AG04450 (cell line): ENCODE measurements at regions of chr17 and their contacts with region 1.

Region 1: DNA sequence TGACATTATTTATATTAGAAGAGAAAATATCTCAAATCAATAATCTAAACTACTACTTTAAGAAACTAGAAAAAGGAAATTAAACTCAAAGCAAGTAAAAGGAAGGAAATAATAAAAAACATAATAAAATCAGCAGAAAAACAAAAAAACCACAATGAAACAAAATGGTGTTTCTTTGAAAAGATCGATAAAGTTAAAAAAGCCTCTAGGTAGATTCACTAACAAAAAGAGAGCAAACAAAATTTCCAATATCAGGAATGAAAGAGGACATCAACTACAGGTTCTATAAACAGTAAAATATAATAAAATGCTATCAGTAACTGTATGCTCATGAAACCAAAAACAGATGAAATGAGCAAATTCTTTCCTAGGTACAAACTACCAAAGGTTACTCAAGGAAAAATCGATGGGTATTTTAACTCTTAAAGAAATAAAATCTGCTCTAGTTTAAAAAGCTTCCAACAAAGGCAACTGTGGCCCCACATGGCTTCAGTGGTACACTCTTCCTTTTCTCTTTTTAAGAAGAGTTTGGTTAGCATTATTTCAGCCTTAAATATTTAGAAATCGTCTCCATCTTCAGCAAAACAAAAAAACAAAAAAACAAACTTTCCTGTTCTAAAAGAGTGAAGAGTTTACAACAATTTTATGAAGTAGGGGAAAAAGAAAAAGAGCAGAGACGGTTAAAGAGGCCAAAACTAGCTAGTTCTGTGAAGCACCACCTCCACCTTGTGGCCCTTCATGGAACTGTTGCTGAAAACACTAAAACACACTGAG is 102.2 kb downstream of the TRIM37 start:
- DNase-seq: no peak
- H3K4me3 ChIP-seq: no peak overlapping the region
- H3K27ac ChIP-seq: no peak overlapping the region
- H3K27me3 ChIP-seq: no peaks in the 10 kb centered on the region
- CTCF ChIP-seq: peak; percentile 98

Region 2: DNA sequence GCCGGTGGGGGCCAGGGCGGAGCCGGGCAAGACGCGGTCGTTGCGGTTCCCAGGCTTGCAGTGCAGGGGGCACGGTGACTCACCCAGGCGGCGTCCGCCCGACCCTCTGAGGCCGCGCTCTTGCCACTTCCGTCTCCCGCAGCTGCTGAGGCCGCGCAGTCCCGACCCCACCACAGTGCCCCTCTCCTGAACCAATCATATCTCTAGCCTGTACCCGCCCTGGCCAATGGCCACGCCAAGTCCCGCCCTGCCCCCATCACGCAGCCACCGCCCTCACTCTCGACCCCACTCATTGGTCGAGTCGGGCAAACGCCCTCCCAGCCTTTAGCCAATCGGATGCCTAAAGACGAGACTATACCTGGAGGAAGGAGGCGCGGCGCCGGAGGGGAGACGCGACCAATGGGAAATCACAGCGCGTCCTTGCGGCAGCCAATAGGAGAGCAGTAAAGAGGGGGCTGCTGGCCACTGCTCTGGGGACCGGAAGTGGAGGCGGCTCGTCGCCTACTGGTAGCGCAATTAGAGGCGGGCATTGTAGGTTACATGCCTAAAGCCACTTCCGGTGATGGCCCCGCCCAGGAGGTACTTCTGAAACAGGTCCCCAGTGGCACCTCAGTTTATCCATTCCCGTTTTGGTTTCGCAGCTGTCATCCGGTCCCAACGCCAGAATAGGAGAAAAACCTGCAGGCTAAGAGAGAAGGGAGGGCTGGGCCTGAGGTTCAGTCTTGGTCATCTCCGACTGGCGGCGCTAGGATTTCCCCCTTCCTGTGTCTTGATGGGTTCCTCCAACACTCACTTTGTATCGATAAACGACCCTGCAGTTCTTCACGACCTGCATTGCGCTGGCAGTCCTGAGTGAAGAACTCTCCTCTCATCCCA is 486.6 kb before region 1 on chr17:
- CTCF ChIA-PET with region 1: interaction called, 41 read pairs
- POLR2A ChIA-PET with region 1: no interaction called
- DNase-seq: peak; percentile 99
- H3K4me3 ChIP-seq: peak overlapping the region; percentile 83
- H3K27ac ChIP-seq: peak overlapping the region; percentile 91
- H3K27me3 ChIP-seq: no peaks in the 10 kb centered on the region
- CTCF ChIP-seq: no peak

Region 3: DNA sequence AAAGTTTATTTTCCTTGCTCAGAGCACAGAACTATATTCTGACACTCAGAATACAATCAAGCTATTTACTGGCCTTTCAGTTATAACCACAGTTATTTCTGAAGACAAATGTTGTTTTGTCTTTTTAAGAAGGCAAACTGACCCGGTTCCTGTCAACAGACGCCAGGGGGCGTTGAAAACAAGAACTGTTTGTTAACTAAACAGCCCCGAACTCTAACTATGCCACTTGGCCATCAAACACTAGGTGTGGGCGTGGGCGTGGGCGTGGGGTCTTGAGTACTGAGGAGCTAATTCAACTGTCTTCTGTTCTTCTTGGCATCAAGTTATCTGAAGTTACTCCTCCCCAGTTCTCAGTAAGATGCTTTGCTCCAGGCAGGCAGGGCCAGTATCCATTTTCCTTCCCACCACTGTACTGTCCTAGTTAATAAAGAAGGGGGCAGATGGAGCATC is 426.9 kb before region 1 on chr17:
- CTCF ChIA-PET with region 1: interaction called, 14 read pairs
- POLR2A ChIA-PET with region 1: no interaction called
- DNase-seq: no peak
- H3K4me3 ChIP-seq: no peak overlapping the region
- H3K27ac ChIP-seq: no peak overlapping the region
- H3K27me3 ChIP-seq: peaks cover 3% of the 10 kb centered on the region
- CTCF ChIP-seq: peak; percentile 70

Region 4: GRCh38 chr17:58587702-58588254 is 416.7 kb before region 1 on chr17:
- CTCF ChIA-PET with region 1: interaction called, 27 read pairs
- POLR2A ChIA-PET with region 1: no interaction called
- DNase-seq: no peak
- H3K4me3 ChIP-seq: no peak overlapping the region
- H3K27ac ChIP-seq: no peak overlapping the region
- H3K27me3 ChIP-seq: no peaks in the 10 kb centered on the region
- CTCF ChIP-seq: peak; percentile 98

Region 5: DNA sequence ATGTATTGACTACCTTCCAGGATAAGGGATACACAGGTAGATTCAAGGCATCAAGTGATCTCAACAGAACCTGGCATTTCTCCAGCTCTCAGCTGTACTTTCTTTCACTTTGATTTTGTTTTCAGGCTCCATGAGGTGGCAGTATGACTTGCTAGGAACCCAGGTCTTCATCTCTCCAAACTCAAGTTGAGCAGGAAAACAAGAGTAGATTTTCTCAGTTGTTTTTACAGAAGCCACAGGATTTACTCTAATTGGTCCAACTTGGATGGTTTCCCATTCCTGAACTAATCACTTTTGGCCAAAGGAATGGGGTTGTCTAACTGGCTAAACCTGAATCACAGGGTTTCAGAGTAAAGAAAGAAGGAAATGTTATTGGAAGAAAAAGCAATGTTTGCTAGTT is 44.5 kb before region 1 on chr17:
- CTCF ChIA-PET with region 1: no interaction called
- POLR2A ChIA-PET with region 1: no interaction called
- DNase-seq: peak; percentile 21
- H3K4me3 ChIP-seq: no peak overlapping the region
- H3K27ac ChIP-seq: no peak overlapping the region
- H3K27me3 ChIP-seq: no peaks in the 10 kb centered on the region
- CTCF ChIP-seq: peak; percentile 34